ENCODE measurements at regions of chr19 and their contacts with region 1.

Region 1: DNA sequence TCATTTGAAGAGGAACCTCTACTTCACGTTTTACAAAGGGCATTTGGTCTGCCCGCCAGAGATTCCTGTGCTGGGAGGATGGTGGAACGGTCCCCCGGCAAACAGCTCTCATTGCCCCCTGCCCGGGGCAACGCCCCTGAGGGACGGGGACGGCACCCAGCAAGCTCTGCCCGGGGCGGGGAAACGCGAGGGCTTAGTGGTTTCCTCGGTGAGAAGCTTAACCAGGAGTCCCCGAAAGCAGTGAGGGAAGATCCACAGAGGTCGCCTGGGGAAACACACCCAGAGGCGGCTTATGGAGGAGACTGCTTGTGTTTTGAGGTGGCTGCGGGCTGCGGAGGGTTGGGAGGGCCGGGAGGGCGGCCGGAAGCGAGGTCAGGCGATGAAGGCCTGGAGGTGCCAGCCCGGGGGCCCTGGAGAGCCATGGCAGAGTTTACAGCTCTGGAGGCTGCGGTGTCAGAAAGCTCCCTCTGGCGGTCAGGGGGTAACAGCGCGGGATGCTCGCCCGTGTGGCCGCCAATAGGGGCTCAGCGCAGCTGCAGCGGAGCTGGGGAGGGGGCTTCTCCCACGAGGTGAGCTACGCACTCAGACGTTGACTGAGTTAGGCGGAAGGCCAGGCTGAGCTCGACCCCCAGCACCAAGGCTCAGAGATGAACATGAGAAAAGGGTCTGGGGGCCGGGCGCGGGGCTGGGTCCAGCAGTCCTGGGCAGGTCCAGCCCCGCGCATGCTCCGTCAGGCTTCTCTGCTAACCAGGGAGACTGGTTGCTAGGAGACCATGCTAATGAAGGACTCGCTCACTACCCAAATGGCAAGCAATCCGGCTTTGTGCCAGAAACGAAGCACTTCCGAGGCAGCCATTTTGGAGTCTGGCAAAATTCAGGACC is 652 bp upstream of the TPGS1 start:
- DNase-seq: peak; percentile 96 to 100 (median 100)
- H3K4me3 ChIP-seq: peak overlapping the region; percentile 86 to 97 (median 93)
- H3K27ac ChIP-seq: peak overlapping the region; percentile 96 to 99
- H3K4me1 ChIP-seq: peaks cover 0 to 40% (median 30%) of the 10 kb centered on the region in 4 experiments
- H3K27me3 ChIP-seq: no peaks in the 10 kb centered on the region

Region 2: GRCh38 chr19:372306-372890 is 134.2 kb before region 1 on chr19:
- CTCF ChIA-PET with region 1: no interaction called
- POLR2A ChIA-PET with region 1: no interaction called
- DNase-seq: no peak
- H3K4me3 ChIP-seq: no peak overlapping the region
- H3K27ac ChIP-seq: no peak overlapping the region
- H3K4me1 ChIP-seq: no peaks in the 10 kb centered on the region
- H3K27me3 ChIP-seq: peaks cover 0 to 49% (median 8%) of the 10 kb centered on the region in 5 experiments

Region 3: GRCh38 chr19:456547-457110 is 50.0 kb before region 1 on chr19:
- CTCF ChIA-PET with region 1: no interaction called
- POLR2A ChIA-PET with region 1: no interaction called
- DNase-seq: no peak
- H3K4me3 ChIP-seq: no peak overlapping the region
- H3K27ac ChIP-seq: no peak overlapping the region
- H3K4me1 ChIP-seq: peaks cover 0 to 9% (median 3%) of the 10 kb centered on the region in 4 experiments
- H3K27me3 ChIP-seq: peaks cover 0 to 38% (median 6%) of the 10 kb centered on the region in 5 experiments

Region 4: DNA sequence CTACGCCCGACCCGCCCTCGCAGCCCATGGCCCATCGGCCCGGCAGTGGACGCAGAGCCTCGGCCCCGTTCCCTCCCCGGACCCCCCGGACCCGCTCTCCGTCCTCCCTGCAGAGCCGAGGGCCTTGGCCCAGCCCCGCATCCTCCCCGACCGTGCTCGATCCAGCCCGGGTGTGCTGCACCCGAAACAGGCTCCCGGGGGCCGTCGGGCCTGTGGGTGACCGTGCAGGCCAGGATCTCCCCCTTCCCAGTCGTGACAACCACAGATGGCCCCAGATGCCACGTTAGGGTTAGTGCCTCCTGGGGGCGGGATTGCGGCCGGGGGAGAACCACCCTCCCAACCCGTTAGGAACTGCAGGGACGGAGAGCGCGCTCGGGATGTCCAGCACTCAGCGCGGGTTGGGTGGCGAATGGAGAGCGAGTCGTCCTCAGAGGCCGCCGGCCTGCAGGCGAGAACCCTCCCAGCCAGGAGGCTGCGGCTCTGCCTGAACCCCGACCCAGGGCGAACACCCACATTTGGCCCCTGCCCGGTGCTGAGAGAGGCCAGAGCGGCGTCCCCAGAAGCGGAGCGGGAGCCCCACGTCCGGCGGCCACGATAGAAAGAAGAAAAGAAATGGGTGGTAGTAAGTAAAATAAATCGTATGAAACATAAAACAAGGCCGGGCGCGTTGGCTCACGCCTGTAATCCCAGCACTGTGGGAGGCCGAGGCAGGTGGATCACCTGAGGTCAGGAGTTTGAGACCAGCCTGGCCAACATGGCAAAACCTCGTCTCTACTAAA is 17.0 kb before region 1 on chr19:
- CTCF ChIA-PET with region 1: interaction called, 23 read pairs
- POLR2A ChIA-PET with region 1: interaction called, 5 read pairs
- DNase-seq: peak in 2 of 3 donors; percentile 33 to 48
- H3K4me3 ChIP-seq: peak overlapping the region; percentile 71 to 86 (median 80)
- H3K27ac ChIP-seq: no peak overlapping the region
- H3K4me1 ChIP-seq: peaks cover 0 to 15% (median 12%) of the 10 kb centered on the region in 4 experiments
- H3K27me3 ChIP-seq: peaks cover 0 to 29% (median 0%) of the 10 kb centered on the region in 5 experiments

Region 5: DNA sequence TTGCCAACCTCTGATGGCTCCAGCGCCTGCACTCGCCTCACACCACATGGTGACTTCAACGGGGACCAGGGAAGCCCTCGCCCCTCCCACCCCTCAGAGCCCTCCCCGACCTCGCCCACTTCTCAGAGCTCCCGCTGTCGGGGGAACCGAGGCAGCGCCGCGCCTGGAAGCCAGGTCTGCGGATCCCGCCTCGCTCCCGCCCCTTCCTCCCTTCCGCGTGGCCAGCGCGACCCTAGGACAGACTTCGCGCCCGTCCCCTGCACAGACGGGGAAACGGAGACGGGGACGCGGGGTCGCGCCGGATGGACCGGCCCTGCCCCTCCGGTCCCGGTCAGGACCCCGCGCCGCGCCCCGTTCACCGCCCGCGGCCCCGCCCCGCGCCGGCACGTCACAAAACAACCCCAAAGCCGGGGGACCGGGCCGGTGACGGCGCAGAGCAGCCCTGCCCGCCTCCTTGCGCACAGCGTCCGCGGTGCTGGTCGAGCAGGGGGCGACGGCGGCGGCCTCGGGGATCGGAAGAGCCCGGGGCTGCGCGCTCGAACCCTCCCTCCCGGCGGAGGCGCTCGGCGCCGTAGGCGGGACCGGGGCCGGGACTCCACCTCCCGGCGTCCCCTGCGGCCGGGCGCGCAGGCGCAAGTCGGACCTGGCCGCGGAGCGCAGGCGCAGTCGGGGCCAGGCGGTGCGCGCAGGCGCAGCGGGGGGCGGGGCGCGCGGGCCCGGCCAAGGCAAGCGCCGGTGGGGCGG is 24.5 kb after region 1 on chr19:
- CTCF ChIA-PET with region 1: interaction called, 56 read pairs
- POLR2A ChIA-PET with region 1: interaction called, 10 read pairs
- DNase-seq: peak; percentile 83 to 94 (median 94)
- H3K4me3 ChIP-seq: peak overlapping the region; percentile 72 to 90 (median 87)
- H3K27ac ChIP-seq: peak overlapping the region; percentile 40 to 77
- H3K4me1 ChIP-seq: peaks cover 0 to 28% (median 22%) of the 10 kb centered on the region in 4 experiments
- H3K27me3 ChIP-seq: peaks cover 0 to 2% (median 0%) of the 10 kb centered on the region in 5 experiments

Region 6: DNA sequence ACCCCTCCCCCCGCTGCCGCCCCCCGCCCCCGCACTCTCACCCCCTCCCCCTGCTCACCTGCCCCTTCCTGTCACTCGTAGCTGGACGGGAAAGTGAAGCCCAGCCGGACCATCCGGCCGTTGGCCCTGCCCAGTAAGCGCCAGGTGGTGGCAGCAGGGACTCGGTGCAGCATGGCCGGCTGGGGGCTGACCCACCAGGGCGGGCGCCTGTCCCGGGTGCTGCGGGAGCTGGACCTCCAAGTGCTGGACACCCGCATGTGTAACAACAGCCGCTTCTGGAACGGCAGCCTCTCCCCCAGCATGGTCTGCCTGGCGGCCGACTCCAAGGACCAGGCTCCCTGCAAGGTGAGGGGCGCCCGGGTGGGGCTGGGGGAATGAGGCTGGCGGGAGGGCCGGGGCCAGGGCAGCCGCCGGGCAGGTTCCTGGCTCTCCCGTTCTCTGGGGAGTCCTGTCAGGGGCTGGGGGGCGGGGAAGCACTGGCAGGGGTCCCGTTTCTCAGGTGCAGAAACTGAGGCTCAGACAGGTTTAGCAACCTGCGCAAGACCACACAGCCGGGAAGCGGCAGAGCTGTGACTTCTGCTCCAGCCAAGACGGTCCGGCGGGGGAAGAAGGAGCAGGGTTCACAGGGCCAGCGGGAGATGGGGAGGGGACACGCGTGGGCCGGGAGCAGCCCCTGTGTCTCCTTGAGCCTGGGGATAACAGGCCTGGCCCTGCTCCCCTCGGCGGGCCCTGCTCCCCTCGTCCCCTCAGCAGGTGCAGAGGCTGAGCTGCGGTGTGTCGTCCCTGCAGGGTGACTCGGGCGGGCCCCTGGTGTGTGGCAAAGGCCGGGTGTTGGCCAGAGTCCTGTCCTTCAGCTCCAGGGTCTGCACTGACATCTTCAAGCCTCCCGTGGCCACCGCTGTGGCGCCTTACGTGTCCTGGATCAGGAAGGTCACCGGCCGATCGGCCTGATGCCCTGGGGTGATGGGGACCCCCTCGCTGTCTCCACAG is 42.5 kb after region 1 on chr19:
- CTCF ChIA-PET with region 1: no interaction called
- POLR2A ChIA-PET with region 1: no interaction called
- DNase-seq: no peak
- H3K4me3 ChIP-seq: no peak overlapping the region
- H3K27ac ChIP-seq: no peak overlapping the region
- H3K4me1 ChIP-seq: peaks cover 0 to under 1% (median 0%) of the 10 kb centered on the region in 4 experiments
- H3K27me3 ChIP-seq: peaks cover 0 to 8% (median 0%) of the 10 kb centered on the region in 5 experiments

Measured in common myeloid progenitor, CD34-positive (primary cell).